ENCODE measurements at regions of chr1 and their contacts with region 1.

Region 1: DNA sequence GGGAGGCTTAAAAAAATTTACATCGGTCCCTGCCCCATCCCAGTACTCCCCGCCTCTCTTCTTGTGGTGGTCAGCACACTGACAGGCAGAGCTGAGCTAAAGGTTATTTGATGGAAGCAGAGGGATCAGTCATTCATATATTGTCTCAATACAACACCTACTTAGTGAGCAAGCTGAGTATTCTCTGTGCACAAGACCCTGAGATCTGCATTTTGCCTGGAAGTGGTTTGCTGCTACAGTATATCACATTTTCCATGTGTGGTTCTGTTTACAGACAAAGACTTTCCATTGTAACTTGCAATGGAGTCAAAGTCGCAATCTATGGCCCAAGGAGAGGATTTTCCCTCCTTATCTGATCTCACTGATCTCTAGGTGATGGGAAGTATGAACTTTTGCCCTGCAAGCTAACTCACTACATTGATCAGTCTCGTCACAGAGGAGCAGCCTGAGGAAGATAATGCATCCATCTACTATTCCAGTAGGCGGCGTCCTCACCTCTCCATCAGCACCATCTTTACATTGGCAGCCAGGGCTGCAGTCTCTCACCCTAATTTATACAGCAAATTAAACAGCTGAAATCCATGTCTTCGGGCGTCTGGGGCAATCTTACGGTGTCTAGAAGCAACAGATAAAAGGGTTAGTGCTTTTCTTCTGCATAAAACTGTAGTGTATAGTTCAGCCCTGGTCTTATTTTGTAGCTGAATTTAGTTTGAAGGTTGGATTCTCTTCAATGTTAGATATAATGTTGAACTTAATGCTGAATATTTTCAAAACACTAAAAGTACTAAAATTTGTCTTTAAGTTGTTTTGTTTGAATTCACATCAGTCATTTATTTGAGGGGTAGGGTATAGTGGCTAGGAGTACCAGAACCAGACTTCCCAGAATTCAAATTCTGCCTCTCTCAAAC is 3.2 kb upstream of the TRAF5 start:
- DNase-seq: peak; percentile 56
- H3K4me3 Mint-ChIP-seq: no peak overlapping the region
- H3K27ac Mint-ChIP-seq: peak overlapping the region; percentile 81
- H3K4me1 Mint-ChIP-seq: peaks cover 72% of the 10 kb centered on the region
- H3K27me3 Mint-ChIP-seq: no peaks in the 10 kb centered on the region

Region 2: DNA sequence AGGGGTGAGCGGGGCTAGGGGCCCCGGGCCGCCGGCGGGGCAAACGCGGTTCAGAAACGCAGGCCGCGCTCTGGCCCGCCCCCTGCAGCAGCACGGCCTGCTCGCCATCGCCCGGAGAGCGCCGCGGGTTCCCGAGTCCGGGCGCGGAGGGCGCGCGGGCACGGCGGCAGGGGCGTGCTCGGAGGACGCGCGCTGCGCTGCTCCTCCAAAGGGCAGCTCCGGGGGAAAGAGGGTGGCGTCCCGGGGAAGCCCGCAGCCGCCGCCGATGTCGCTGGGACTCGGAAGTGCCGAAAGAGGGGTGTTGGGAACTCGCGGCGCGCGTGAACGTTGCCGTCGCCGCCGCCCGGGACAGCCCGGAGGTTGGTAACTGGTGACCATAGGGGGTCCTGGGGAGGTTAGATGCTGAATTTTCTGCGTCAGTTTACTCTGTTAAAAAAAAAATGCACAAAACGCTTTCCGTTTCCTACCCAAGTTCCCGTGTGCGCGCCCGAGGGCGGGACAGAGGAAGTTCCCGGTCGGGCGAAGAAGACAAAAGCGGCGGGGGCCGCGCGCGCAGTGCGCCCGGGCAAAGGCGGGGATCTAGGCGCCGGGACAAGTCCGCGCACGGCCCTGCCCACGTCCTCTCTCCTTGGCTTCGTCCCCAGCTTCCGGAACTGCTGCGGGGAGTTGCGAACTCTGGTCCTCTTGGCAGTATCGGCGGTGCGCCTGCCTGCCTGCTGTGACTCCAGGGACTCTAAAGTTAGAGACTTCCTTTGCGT is 994.5 kb before region 1 on chr1 and contains the start of gene HHAT:
- intact Hi-C with region 1: loop called (anchors 2 kb)
- DNase-seq: peak; percentile 52
- H3K4me3 Mint-ChIP-seq: peak within 1 kb of the TSS; percentile 90
- H3K27ac Mint-ChIP-seq: peak within 1 kb of the TSS; percentile 95
- H3K4me1 Mint-ChIP-seq: peaks cover 42% of the 10 kb centered on the region
- H3K27me3 Mint-ChIP-seq: peaks cover 12% of the 10 kb centered on the region
- total RNA-seq, gene HHAT: 0.67 and 0.73 TPM in 2 replicates

Region 3: GRCh38 chr1:211258756-211259637 is 64.4 kb before region 1 on chr1 and contains the start of gene RCOR3:
- intact Hi-C with region 1: loop called (anchors 1 kb)
- DNase-seq: peak; percentile 85
- H3K4me3 Mint-ChIP-seq: peak within 1 kb of the TSS; percentile 90
- H3K27ac Mint-ChIP-seq: peak within 1 kb of the TSS; percentile 90
- H3K4me1 Mint-ChIP-seq: peaks cover 20% of the 10 kb centered on the region
- H3K27me3 Mint-ChIP-seq: peaks cover 4% of the 10 kb centered on the region
- total RNA-seq, gene RCOR3: 40.5 and 41.0 TPM in 2 replicates

Region 4: DNA sequence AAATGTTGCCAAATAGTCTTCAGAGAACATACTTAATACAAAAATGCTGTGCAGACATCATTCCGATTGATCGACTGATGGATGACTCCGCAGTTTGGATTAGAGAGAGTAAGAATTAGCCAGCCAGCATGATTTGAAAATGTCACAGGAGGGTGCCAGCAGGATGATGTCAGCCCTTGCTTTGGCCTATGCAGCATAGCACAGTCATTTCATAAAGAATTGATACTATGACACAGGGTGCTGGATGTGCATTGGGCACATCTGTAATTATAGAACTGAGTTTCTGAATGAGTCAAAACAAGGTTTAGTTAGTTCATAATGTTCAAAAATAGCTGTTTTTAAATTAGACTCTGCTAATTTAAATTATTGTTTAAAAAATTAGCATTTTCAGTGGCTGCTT is 18.4 kb before region 1 on chr1:
- intact Hi-C with region 1: loop called (anchors 1 kb)
- DNase-seq: no peak
- H3K4me3 Mint-ChIP-seq: no peak overlapping the region
- H3K27ac Mint-ChIP-seq: peak overlapping the region; percentile 41
- H3K4me1 Mint-ChIP-seq: peaks cover 34% of the 10 kb centered on the region
- H3K27me3 Mint-ChIP-seq: no peaks in the 10 kb centered on the region

Region 5: DNA sequence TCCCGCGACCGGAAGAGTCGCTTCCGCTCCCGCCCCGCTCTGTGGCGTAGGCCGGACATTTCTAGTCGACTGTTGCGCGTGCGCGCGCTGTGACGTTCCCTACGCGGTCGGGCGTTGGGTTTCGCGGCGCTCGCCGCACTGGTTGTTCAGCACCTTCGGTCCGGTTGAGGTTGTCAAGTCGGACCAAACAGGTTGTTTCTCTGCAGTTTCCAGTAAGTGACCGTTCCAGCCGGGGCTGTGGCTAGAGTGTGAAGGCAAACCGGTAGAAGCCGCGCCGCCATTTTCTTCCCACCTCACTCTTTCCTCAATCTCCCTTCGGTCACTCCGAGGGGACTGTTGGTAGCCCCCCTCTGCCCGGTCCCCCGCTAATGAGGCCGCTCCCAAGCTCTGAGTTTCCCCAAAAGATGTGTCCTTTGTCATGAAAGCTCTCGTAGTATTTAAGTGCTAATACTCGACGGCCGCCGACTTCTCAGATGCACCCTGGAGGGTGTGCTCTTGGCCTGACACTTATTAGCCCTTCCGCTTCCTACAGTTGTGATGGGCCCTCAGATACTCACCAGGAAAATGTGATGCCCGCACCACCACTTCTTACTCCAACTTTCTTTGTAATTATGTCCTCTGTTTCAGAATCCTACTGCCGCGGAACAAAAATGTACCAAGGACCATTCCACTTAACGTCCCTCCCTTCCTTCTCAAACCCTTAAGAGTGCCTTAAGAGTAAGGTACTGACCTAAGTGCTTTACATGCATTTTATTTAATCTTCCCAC is 59.5 kb after region 1 on chr1:
- intact Hi-C with region 1: loop called (anchors 1 kb)
- DNase-seq: peak; percentile 77
- H3K4me3 Mint-ChIP-seq: peak overlapping the region; percentile 91
- H3K27ac Mint-ChIP-seq: peak overlapping the region; percentile 89
- H3K4me1 Mint-ChIP-seq: peaks cover 51% of the 10 kb centered on the region
- H3K27me3 Mint-ChIP-seq: peaks cover 8% of the 10 kb centered on the region

Region 6: GRCh38 chr1:211514030-211514754 is 190.8 kb after region 1 on chr1:
- intact Hi-C with region 1: loop called (anchors 1 kb)
- DNase-seq: peak; percentile 58
- H3K4me3 Mint-ChIP-seq: peak overlapping the region; percentile 66
- H3K27ac Mint-ChIP-seq: peak overlapping the region; percentile 55
- H3K4me1 Mint-ChIP-seq: peaks cover 27% of the 10 kb centered on the region
- H3K27me3 Mint-ChIP-seq: peaks cover 13% of the 10 kb centered on the region

Region 7: GRCh38 chr1:211939876-211940468 is 616.6 kb after region 1 on chr1:
- intact Hi-C with region 1: loop called (anchors 2 kb)
- DNase-seq: peak; percentile 33
- H3K4me3 Mint-ChIP-seq: no peak overlapping the region
- H3K27ac Mint-ChIP-seq: peak overlapping the region; percentile 2
- H3K4me1 Mint-ChIP-seq: peaks cover 47% of the 10 kb centered on the region
- H3K27me3 Mint-ChIP-seq: no peaks in the 10 kb centered on the region

Measured in activated T-helper 1 cell treated with anti-CD3 and anti-CD28 coated beads, Interleukin-12 subunit alpha, Interleukin-12 subunit beta, Interleukin-2, Interleukin-4 antibody, amounts not matched to agents 30 ng/mL and 10 ng/mL and 1 ng/mL, durations not matched to agents 14 hours and 24 hours and 36 hours (primary cell).